Cardiac septum (tissue), 1 donor: ENCODE measurements at regions of chr19 and their contacts with region 1.

Region 1: GRCh38 chr19:42254989-42255765 is at the start of gene ERF:
- DNase-seq: peak; percentile 98
- total RNA-seq, gene ERF: 37.4 TPM

Region 2: DNA sequence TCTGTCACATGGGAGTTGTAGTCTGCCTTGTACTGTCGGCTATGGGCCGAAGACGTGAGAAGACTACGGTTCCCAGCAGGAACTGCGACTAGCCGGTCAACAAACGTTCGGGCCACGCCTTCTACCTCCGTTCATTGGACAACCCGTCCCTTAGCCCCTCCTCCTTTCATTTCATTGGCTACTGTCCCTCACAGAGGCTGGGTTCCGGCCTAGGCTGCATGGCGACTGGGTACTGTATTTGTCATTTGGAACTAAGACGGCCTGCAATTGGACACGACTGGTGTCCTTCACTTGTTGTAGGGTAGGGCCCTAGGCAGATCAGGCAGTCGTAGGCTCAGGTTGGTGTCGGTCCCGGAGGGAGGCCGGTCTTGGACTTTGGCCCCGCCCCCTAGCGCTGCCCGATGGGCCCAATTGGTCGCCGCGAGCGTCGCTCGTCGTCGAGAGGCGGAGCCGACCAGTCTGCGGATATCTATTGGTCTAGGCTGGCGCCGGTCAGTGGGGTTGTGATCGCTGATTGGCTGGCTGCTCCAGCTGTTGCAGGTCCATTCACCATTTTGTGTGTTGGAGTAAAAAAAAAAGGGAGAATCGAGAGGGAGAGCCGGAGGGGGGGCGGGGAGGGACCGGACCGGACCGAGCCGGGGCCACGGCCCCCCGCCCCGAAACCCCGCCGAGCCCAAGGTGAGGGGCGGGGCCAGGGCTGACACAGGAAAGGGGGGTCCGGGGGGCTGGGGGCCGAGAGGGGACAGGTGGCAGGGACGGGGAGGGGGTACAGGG is 13.7 kb after region 1 on chr19 and contains the start of gene CIC:
- intact Hi-C with region 1: loop called (anchors 1 kb)
- DNase-seq: peak; percentile 100
- total RNA-seq, gene CIC: 51.3 TPM